HCT116 (cell line): ENCODE measurements at regions of chr20 and their contacts with region 1.

Region 1: GRCh38 chr20:13771853-13772453 is 12.8 kb downstream of the ESF1 start:
- DNase-seq: no peak
- ATAC-seq: no peak
- H3K4me3 ChIP-seq: no peak overlapping the region
- H3K27ac ChIP-seq: no peak overlapping the region
- H3K4me1 ChIP-seq: peaks cover 0 to under 1% of the 10 kb centered on the region in 2 experiments; a peak in 2 of 4 replicates
- H3K27me3 ChIP-seq: no peaks in the 10 kb centered on the region
- CTCF ChIP-seq: peak; percentile 8 to 50 (median 31); a peak in 3 of 6 replicates
- POLR2A ChIP-seq: no peak
- RAD21 ChIP-seq: peak; percentile 40

Region 2: GRCh38 chr20:13325033-13325432 is 446.9 kb before region 1 on chr20:
- CTCF ChIA-PET with region 1: interaction called, 8 read pairs
- POLR2A ChIA-PET with region 1: no interaction called
- RAD21 ChIA-PET with region 1: no interaction called
- intact Hi-C with region 1: loop called (anchors 5 kb)
- DNase-seq: peak; percentile 18
- ATAC-seq: peak; percentile 86
- H3K4me3 ChIP-seq: no peak overlapping the region
- H3K27ac ChIP-seq: no peak overlapping the region
- H3K4me1 ChIP-seq: no peaks in the 10 kb centered on the region
- H3K27me3 ChIP-seq: no peaks in the 10 kb centered on the region
- CTCF ChIP-seq: peak; percentile 46 to 74 (median 56); a peak in 5 of 6 replicates
- POLR2A ChIP-seq: no peak
- RAD21 ChIP-seq: peak; percentile 57

Region 3: GRCh38 chr20:13458860-13459451 is 313.0 kb before region 1 on chr20:
- CTCF ChIA-PET with region 1: interaction called, 3 read pairs
- POLR2A ChIA-PET with region 1: no interaction called
- RAD21 ChIA-PET with region 1: no interaction called
- intact Hi-C with region 1: loop called (anchors 5 kb)
- DNase-seq: peak; percentile 13
- ATAC-seq: peak; percentile 82
- H3K4me3 ChIP-seq: no peak overlapping the region
- H3K27ac ChIP-seq: no peak overlapping the region
- H3K4me1 ChIP-seq: no peaks in the 10 kb centered on the region
- H3K27me3 ChIP-seq: no peaks in the 10 kb centered on the region
- CTCF ChIP-seq: peak; percentile 35 to 88 (median 82); a peak in 5 of 6 replicates
- POLR2A ChIP-seq: no peak
- RAD21 ChIP-seq: peak; percentile 49

Region 4: GRCh38 chr20:13755809-13756208 is 16.1 kb before region 1 on chr20:
- CTCF ChIA-PET with region 1: interaction called, 19 read pairs
- POLR2A ChIA-PET with region 1: no interaction called
- RAD21 ChIA-PET with region 1: no interaction called
- intact Hi-C with region 1: no loop called
- DNase-seq: no peak
- ATAC-seq: no peak
- H3K4me3 ChIP-seq: no peak overlapping the region
- H3K27ac ChIP-seq: no peak overlapping the region
- H3K4me1 ChIP-seq: no peaks in the 10 kb centered on the region
- H3K27me3 ChIP-seq: no peaks in the 10 kb centered on the region
- CTCF ChIP-seq: no peak
- POLR2A ChIP-seq: no peak
- RAD21 ChIP-seq: no peak

Region 5: GRCh38 chr20:13784893-13785715 is 13.2 kb after region 1 on chr20 and contains the starts of genes ESF1 and NDUFAF5:
- CTCF ChIA-PET with region 1: interaction called, 23 read pairs
- POLR2A ChIA-PET with region 1: interaction called, 3 read pairs
- RAD21 ChIA-PET with region 1: no interaction called
- intact Hi-C with region 1: no loop called
- DNase-seq: peak; percentile 95
- ATAC-seq: peak; percentile 88
- H3K4me3 ChIP-seq: peak within 1 kb of the TSS; percentile 80 to 99
- H3K27ac ChIP-seq: peak within 1 kb of the TSS; percentile 64
- H3K4me1 ChIP-seq: peaks cover 7 to 18% of the 10 kb centered on the region in 2 experiments
- H3K27me3 ChIP-seq: no peaks in the 10 kb centered on the region
- CTCF ChIP-seq: no peak
- POLR2A ChIP-seq: peak; percentile 72
- RAD21 ChIP-seq: no peak
- total RNA-seq, gene ESF1: 25.4 TPM
- total RNA-seq, gene NDUFAF5: 30.8 TPM

Region 6: GRCh38 chr20:13865791-13866351 is 93.9 kb after region 1 on chr20:
- CTCF ChIA-PET with region 1: no interaction called
- POLR2A ChIA-PET with region 1: no interaction called
- RAD21 ChIA-PET with region 1: no interaction called
- intact Hi-C with region 1: no loop called
- DNase-seq: no peak
- ATAC-seq: no peak
- H3K4me3 ChIP-seq: no peak overlapping the region
- H3K27ac ChIP-seq: no peak overlapping the region
- H3K4me1 ChIP-seq: no peaks in the 10 kb centered on the region
- H3K27me3 ChIP-seq: no peaks in the 10 kb centered on the region
- CTCF ChIP-seq: no peak
- POLR2A ChIP-seq: no peak
- RAD21 ChIP-seq: no peak